ENCODE measurements at regions of chr10 and their contacts with region 1.

Region 1: GRCh38 chr10:116690356-116691322 is 51.7 kb downstream of the HSPA12A start:
- DNase-seq: peak; percentile 61

Region 2: GRCh38 chr10:117174439-117175214 is 484.0 kb after region 1 on chr10:
- in situ Hi-C with region 1: loop called (anchors 25 kb)
- DNase-seq: peak; percentile 83